Right ventricle myocardium inferior (tissue), 1 donor: ENCODE measurements at regions of chr5 and their contacts with region 1.

Region 1: DNA sequence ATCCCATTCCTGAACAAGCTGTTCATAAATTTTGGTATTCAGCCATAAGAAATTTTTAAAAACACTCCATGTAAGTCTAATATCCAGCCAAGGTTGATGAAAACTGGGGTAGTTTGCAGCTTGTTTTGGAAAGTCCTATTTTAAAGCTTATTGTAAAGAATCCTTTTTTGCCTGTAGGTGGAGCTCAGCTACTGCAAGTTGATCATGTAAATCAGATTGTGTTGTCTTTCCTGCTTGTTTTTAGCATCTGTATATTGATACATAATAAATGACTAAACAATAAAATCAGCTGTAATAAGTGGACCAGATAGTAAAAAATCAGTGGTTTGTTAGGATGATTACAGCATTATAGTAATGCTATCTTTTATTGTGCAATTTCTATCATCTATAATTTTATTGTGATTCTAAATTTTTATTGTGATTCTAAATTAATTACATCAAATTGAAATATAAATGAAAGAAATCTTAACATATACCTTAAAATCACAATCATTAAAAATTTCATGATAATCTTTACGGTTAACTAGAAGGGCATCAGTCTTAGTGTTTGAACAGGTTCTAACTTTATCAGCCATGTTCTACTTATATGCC is 42.4 kb downstream of the CWC27 start:
- DNase-seq: no peak
- ATAC-seq: no peak

Region 2: GRCh38 chr5:64958757-64959391 is 147.7 kb after region 1 on chr5:
- intact Hi-C with region 1: loop called (anchors 10 kb)
- DNase-seq: no peak
- ATAC-seq: no peak

Region 3: DNA sequence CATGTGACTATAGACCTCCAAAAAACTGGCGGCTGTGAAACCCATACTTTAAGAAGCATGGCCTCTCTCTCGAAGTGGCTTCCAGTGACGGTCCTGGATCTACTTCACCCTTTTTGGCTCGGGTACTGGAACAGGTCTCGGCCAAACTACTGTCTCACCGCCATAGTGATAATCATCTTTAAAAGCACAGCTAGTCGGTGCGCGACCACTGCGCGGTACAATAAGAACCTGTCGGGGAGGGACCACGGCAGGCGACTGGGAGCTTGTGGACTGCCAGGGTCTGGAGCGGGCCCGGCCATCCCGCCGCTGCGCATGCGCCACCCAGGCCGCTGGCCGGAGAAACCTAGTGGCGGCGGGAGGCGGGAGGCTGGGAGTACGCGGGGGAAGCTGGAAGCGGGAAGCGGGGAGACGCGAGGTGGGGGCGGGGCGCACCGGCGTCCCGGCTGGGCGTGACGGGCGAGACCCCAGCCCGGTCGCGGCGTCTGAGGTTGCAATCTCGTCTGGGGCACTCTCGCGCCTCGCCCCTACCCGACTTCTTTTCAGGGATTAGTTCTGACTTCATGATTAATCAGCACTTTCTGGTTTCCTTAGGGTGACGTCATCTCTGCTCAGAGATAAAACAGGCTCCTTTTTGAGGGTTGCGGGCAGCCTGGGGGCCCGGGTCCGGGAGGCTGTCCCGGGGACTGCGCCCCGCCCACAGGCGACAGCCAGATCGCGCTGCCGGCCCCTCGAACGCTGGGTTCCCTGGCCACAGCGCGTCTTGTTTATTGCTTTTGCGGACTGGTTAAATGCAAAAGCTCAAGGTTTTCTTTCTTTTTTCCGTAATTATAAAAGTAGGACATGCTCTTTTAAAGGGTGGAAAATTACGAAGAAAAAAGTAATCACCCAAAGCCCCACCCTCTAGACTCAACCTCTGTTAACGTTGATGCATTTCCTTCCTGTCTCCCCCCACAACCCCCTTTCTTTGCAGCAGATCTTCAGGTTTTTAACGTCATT is 224.4 kb after region 1 on chr5:
- intact Hi-C with region 1: loop called (anchors 5 kb)
- DNase-seq: peak; percentile 93
- ATAC-seq: peak; percentile 96

Region 4: GRCh38 chr5:65334077-65334476 is 522.9 kb after region 1 on chr5:
- intact Hi-C with region 1: loop called (anchors 10 kb)
- DNase-seq: no peak
- ATAC-seq: no peak